Naive thymus-derived CD4-positive, alpha-beta T cell (primary cell): ENCODE measurements at regions of chr9 and their contacts with region 1.

Region 1: DNA sequence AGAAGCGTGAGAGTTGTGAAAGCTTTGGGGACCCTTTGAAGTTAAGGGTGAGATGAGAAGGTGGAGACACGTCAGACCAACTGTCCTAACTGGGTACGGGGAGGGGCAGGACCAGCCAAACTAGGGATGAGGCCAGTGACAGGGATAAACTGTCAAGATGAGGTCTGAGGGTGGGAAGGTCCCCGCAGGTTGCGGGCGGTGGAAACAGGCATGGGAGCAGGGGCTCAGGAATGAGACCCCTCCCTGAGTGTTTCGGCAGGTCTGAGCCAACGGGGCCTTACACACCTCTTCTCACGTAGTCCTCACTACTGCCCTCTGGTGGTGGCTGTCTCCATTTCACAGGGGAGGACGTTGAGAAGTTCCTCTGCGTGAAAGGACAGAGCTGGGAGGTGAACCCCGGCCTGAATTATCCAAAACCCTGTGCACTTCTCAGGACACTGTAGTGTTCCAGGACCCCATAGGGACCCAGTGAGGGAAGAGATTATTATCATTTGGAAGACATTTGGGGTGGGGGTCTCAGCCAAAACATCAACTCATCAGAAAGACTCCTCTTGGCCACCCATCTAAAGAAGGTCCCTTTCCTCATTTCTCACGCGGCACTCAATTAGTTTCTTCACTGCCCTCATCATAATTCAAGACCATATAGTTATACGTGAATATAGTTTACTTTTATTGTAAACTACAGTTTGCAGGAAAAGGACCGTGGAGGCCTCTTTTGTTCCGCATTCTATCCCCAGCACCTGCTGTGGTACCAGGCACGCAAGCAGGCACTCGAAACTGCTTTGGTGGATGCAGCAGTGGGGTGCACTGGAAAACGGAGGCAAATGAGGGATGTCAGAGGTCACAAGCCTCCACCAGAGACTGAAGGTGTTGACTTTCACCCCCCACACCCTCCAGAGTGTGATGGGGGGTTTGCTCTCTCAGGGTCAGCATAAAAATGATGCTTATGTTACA is 21.7 kb upstream of the NANS start:
- DNase-seq: peak; percentile 76 to 92 (median 86)
- ATAC-seq: peak; percentile 99
- H3K4me3 ChIP-seq: no peak overlapping the region
- H3K4me3 Mint-ChIP-seq: peak overlapping the region in 8 of 10 donors; percentile 11 to 63 (median 41)
- H3K27ac ChIP-seq: no peak overlapping the region
- H3K27ac Mint-ChIP-seq: peak overlapping the region in 8 of 9 donors; percentile 9 to 87 (median 66)
- H3K4me1 ChIP-seq: peaks cover 0 to 4% of the 10 kb centered on the region in 2 donors
- H3K4me1 Mint-ChIP-seq: peaks cover 5 to 12% (median 8%) of the 10 kb centered on the region in 7 donors
- H3K27me3 ChIP-seq: no peaks in the 10 kb centered on the region
- H3K27me3 Mint-ChIP-seq: peaks cover 0 to 8% (median 0%) of the 10 kb centered on the region in 5 donors

Region 2: GRCh38 chr9:97890038-97890437 is 144.8 kb before region 1 on chr9:
- CTCF ChIA-PET with region 1: interaction called, 3 read pairs
- POLR2A ChIA-PET with region 1: no interaction called
- intact Hi-C with region 1: loop called in 1 of 2 experiments (anchors 1 kb)
- DNase-seq: peak; percentile 40 to 73 (median 57)
- ATAC-seq: peak; percentile 88
- H3K4me3 ChIP-seq: no peak overlapping the region
- H3K4me3 Mint-ChIP-seq: peak overlapping the region in 1 of 10 donors; percentile 51
- H3K27ac ChIP-seq: no peak overlapping the region
- H3K27ac Mint-ChIP-seq: peak overlapping the region in 5 of 9 donors; percentile 28 to 81 (median 68)
- H3K4me1 ChIP-seq: peaks cover 0 to 4% of the 10 kb centered on the region in 2 donors
- H3K4me1 Mint-ChIP-seq: peaks cover 6 to 23% (median 18%) of the 10 kb centered on the region in 7 donors
- H3K27me3 ChIP-seq: no peaks in the 10 kb centered on the region
- H3K27me3 Mint-ChIP-seq: no peaks in the 10 kb centered on the region